ENCODE measurements at regions of chr17 and their contacts with region 1.

Region 1: GRCh38 chr17:79839363-79840268 is at the start of gene CBX4:
- DNase-seq: peak; percentile 95

Region 2: DNA sequence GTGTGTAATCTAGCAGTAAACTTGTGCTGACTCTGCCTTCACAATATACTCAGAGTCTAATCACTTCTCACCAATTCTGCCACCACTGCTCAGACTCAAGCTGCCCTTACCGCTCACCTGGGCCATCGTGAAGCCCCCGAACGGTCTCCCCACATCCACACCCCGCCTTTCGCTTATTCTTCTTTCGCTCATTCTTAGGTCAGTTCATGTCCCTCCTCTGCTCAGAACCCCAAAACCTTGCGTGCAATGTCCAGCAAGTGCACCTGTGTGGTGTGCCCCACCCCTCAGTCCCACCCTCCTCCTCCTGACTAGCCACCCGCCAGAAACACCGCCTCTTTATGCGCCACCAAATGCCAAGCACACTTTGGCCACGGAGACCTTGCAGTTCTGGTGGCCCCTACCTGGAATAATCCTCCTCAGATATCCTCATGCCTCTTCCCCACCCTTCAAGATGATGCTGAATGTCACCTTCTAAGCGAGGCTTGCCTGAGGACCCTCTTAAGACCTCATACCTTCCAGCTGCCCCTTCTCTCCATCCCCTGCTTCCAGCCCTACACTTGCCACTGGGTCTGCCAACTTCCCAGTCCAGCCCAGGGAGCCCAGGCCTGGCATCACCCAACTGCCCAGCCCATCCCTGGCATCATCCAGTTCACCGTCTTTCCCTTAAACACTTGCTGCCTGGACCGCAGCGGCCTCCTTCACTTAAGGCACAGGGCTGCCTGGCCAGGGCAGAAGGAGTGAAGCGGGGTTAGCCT is 194.4 kb before region 1 on chr17:
- CTCF ChIA-PET with region 1: no interaction called
- POLR2A ChIA-PET with region 1: no interaction called
- DNase-seq: peak; percentile 3

Region 3: DNA sequence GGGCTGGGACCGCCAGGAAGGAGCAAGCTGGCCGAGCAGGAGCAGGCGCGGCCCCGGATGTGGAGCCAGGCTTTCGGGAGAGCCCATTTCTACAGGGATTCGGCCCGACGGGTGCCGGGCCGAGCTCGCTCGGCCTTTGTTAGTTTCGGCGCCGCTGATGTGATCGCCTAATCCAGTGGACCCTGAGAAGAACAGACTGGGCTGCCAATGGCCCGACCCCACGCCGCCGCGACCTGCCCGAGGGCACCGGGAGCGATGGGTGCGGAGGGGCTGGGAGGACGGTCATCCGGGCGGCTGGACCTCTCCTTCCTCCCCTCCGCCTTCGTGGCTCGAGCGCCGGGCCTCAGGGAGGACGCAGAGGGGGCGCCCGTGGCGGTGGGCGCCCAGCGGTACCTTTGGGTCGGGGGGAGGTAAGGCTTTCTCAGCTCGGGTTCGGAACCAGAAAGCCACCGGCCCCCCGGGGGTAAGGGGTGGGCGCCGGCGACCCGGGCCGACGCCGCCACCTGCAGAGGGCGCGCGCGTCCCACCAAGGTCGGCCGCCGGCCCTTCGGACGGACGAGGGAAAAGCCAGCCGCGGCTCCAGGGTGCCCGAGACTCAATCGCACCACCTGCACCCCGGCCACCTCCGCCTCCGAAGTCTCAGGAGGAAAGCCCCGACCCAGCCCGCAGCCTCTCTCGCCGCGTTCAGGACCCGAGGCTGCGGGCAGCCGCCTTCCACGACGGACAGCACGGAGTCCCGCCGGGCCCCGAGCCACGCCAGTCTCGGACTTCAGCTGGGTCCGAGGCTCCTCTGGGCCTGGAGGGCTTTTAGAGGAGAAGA is 49.9 kb before region 1 on chr17:
- CTCF ChIA-PET with region 1: interaction called, 6 read pairs
- POLR2A ChIA-PET with region 1: interaction called, 22 read pairs
- DNase-seq: peak; percentile 67

Region 4: DNA sequence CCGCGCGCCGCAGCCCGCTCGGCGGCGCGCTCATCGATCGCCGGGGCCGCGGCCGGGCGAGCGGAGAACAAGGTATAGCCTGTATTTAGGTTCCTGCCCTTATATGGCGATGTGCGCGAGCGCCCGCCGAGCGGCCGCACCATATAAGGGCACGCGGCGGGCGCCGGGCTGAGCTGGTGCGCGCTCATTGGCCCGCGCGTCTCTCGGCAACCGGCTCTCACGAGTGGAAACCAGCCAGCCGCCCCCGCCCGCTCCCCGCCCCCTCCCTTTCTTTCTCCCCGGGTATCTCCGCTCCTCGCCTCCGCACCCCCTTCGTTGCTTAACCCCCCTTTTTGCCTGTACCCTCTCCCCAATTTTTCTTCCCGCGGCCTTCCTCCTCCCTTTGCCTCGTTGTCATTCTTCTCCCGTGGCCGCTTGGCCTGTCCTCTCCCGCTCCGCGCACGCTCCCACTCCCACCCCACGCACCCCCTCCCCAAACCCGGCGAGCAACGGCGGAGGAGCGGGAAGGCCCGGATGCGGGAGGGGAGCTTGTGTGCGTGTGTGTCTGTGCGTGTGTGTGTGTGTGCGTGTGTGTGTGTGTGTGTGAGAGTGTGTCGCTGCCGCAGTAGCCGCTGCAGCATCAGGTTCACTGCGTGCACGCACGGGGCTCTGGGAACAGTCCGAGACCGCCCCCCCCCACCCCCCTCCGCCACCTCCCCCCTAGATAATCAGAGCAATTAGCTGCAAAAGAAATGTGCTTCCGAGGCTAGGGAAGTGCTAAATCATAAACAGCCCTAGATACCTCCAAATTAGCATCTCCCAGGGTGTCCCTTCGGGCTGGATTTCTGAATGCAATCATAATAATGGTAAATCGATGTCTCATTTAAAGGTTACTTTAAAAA is 29.2 kb before region 1 on chr17:
- CTCF ChIA-PET with region 1: interaction called, 6 read pairs
- POLR2A ChIA-PET with region 1: interaction called, 58 read pairs
- DNase-seq: peak; percentile 91

Region 5: GRCh38 chr17:79826204-79826680 is 13.4 kb before region 1 on chr17:
- CTCF ChIA-PET with region 1: interaction called, 9 read pairs
- POLR2A ChIA-PET with region 1: interaction called, 25 read pairs
- DNase-seq: no peak

Region 6: DNA sequence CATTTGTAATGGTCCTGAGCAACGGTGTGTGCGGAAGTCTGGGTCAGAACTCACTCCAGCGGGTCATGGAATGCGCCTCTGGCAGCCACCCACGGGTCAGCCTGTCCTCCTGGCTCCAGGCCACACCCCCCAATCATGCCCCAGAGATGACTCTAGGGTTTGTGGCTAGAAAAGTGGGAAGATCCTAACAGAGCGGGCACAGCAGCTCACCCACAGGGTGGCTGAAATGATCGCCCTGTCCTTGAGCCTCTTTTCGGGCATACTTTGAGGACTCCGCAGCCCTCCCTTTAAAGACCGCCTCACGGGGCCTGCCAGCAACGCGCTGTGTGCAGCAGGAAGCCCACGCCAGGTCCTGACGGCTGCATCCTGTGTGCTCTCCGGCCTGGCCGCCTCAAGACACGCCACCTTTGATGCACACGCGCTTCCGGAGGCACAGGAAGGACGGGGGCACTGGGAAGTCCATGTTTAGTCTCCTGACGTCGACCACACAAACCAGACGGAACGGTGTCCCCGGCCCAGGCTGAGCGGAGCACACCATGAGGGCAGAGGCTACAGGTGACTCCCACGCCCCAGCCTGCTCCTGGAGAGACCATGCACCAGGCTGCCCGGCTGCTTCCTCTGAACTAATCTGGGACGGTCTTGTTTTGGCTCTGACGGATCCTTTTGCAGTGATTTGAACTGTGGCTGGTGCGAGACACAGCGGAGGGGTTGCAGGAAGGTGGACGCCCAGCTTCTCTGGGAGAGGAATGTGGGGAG is 103.2 kb after region 1 on chr17:
- CTCF ChIA-PET with region 1: no interaction called
- POLR2A ChIA-PET with region 1: no interaction called
- DNase-seq: no peak

Region 7: DNA sequence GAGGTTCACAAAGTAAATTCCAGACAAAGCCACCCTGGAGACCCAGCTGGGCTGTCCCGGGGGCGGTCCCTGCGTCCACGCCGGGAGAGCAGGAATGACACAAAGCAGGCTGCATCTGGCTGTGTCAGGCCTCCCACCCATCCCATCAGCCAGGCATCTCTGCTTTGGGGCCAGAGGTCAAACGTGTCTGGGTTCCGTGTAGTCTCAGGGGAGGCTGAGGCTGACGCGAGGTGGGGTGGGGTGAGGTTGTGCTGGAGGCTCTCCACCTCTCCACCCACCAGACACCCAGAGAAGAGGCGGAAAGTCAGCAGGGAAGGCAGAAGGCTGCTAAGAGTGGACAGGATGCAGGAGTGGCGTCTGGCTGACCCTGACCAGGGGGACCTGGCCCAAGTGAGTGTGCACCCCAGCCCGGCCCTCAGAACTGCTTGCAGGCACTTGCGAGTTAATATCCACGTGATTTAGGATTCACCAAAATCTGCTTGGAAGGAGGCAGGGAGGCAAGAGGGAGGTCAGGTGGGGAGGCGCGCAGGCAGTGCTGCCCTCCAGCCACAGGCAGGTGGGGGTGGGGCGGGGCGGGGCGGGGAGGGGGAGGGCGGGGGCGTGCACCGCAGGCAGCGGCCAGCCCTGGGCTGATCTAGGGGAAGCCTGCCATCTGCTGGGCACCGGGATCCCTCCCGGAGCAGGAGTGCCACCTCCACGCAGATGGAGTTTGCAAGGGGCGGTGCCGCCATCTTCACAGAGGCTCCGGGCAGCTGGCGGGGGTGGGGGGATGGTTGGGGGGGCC is 151.7 kb after region 1 on chr17:
- CTCF ChIA-PET with region 1: interaction called, 3 read pairs
- POLR2A ChIA-PET with region 1: interaction called, 49 read pairs
- DNase-seq: peak; percentile 91